Activated T-helper 1 cell treated with anti-CD3 and anti-CD28 coated beads, Interleukin-12 subunit alpha, Interleukin-12 subunit beta, Interleukin-2, Interleukin-4 antibody, amounts not matched to agents 30 ng/mL and 10 ng/mL and 1 ng/mL, durations not matched to agents 14 hours and 24 hours and 36 hours (primary cell): ENCODE measurements at regions of chr7 and their contacts with region 1.

Region 1: GRCh38 chr7:135211179-135211945 is at the start of gene WDR91:
- DNase-seq: peak; percentile 86
- H3K4me3 Mint-ChIP-seq: peak within 1 kb of the TSS; percentile 96
- H3K27ac Mint-ChIP-seq: peak within 1 kb of the TSS; percentile 98
- H3K4me1 Mint-ChIP-seq: peaks cover 47% of the 10 kb centered on the region
- H3K27me3 Mint-ChIP-seq: no peaks in the 10 kb centered on the region
- total RNA-seq, gene WDR91: 34.6 and 35.4 TPM in 2 replicates

Region 2: GRCh38 chr7:134865001-134865845 is 346.1 kb before region 1 on chr7:
- intact Hi-C with region 1: loop called (anchors 10 kb)
- DNase-seq: peak; percentile 44
- H3K4me3 Mint-ChIP-seq: peak overlapping the region; percentile 8
- H3K27ac Mint-ChIP-seq: peak overlapping the region; percentile 49
- H3K4me1 Mint-ChIP-seq: peaks cover 30% of the 10 kb centered on the region
- H3K27me3 Mint-ChIP-seq: no peaks in the 10 kb centered on the region

Region 3: DNA sequence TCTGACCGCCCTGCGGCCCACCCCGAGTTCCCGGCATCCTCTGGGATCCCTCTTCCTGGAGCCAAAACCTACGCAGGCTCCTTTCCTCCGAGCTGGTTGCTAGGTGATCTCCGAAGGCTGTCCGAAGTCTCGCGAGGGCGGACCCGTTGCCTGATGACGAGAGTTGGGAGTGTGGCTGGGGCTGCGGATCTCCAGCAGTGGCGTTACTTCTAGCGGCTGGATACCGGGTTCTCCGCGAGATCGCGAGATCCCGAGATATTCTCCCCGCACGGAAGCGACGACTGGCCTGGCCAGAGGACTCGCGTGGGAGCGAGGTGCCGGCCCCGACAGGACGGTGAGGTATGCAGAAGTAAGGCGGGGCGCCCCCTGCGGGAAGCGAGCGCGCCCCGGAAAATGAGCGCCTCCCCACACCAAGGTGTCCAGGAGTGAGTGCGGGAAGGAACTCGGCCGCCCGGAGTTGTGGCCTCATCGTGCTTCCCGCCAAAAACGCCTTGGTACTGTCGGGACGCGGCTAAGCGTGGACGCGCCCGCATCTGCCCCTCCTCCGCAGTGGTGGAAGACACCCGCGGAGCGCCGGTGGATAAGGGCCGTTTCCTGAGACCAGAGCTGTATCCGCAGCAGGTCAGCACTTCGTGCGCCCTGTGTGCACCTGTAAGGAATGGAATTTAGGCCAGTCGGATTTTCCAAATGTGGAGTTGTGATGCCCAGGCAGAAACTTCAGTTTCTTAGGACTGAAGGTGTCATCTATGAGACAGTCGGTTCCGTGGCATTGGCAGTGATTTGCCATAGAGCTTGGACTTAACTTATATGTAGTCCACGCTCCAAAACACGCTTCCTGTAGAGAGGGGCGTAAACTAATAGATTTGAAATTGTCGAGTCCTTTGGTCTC is 224.8 kb before region 1 on chr7 and contains the start of gene AGBL3:
- intact Hi-C with region 1: loop called (anchors 1 kb)
- DNase-seq: peak; percentile 87
- H3K4me3 Mint-ChIP-seq: peak within 1 kb of the TSS; percentile 97
- H3K27ac Mint-ChIP-seq: peak within 1 kb of the TSS; percentile 86
- H3K4me1 Mint-ChIP-seq: peaks cover 49% of the 10 kb centered on the region
- H3K27me3 Mint-ChIP-seq: no peaks in the 10 kb centered on the region
- total RNA-seq, gene AGBL3: 1.5 and 1.9 TPM in 2 replicates

Region 4: GRCh38 chr7:135147899-135148721 is 63.3 kb before region 1 on chr7 and contains the start of gene TMEM140:
- intact Hi-C with region 1: loop called (anchors 1 kb)
- DNase-seq: peak; percentile 61
- H3K4me3 Mint-ChIP-seq: peak within 1 kb of the TSS; percentile 88
- H3K27ac Mint-ChIP-seq: peak within 1 kb of the TSS; percentile 96
- H3K4me1 Mint-ChIP-seq: peaks cover 60% of the 10 kb centered on the region
- H3K27me3 Mint-ChIP-seq: no peaks in the 10 kb centered on the region
- total RNA-seq, gene TMEM140: 2.9 and 4.5 TPM in 2 replicates

Region 5: DNA sequence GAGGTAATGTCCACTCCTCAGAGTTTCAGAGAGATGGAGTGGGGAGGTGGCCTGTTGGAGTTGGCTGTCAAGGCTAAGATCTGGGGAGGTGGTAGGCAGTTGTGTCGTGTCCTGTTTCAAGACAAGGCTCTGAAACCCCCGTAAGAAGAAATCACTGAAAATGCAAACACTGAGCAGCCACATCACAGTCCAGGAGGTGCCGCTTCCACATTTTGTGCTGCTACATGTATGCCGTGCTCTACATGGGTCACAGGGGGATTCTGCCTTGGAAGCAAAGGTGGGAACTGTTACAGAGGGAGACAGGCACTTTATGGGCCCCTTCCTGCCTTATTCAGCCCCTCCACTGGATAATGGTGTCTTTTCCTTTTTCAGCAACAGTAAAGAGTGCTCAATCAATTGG is 11.9 kb before region 1 on chr7:
- intact Hi-C with region 1: loop called (anchors 1 kb)
- DNase-seq: no peak
- H3K4me3 Mint-ChIP-seq: no peak overlapping the region
- H3K27ac Mint-ChIP-seq: no peak overlapping the region
- H3K4me1 Mint-ChIP-seq: peaks cover 27% of the 10 kb centered on the region
- H3K27me3 Mint-ChIP-seq: no peaks in the 10 kb centered on the region

Region 6: GRCh38 chr7:135224027-135224426 is 12.7 kb after region 1 on chr7:
- intact Hi-C with region 1: no loop called
- DNase-seq: no peak
- H3K4me3 Mint-ChIP-seq: no peak overlapping the region
- H3K27ac Mint-ChIP-seq: no peak overlapping the region
- H3K4me1 Mint-ChIP-seq: peaks cover 11% of the 10 kb centered on the region
- H3K27me3 Mint-ChIP-seq: peaks cover 2% of the 10 kb centered on the region

Region 7: DNA sequence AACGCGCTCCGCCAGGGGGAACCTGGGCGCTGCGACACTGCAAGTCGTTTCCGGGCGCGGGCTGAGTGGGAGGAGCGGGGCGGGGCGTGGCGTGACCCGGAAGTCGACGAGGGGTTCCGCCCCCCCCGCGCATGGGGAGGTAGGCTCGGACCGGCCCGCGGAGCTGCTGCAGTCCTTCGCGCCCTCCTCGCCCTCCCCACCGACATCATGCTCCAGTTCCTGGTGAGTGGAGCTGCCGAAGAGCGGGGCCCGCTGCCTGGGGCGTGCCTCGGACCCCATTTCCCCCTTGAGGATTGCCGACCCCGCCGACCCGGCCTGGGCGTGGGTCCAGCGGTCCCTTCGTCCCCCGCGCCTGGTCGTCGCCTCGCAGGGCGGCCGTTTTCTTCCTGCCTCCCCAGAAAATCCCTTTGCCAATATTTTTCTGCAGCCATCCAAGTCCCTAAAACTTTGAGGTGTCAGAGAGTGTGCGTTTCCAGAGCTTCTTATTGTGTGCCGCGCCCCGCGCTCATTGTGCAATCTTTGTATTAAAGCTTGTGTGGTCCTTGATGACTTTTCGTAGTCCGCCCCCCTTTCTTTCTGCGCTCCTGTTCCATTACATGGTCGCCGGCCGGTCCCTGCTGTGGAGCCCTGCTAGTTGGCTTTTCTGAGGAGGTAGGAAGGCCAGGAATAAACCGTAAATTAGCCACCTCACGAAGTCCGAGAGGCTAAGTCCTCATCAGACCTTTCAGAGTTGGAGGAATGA is 451.2 kb after region 1 on chr7 and contains the start of gene STMP1:
- intact Hi-C with region 1: loop called (anchors 1 kb)
- DNase-seq: peak; percentile 93
- H3K4me3 Mint-ChIP-seq: peak within 1 kb of the TSS; percentile 97
- H3K27ac Mint-ChIP-seq: peak within 1 kb of the TSS; percentile 93
- H3K4me1 Mint-ChIP-seq: peaks cover 22% of the 10 kb centered on the region
- H3K27me3 Mint-ChIP-seq: no peaks in the 10 kb centered on the region
- total RNA-seq, gene STMP1: 22.7 and 24.7 TPM in 2 replicates